Activated CD8-positive, alpha-beta T cell treated with anti-CD3 and anti-CD28 coated beads, Interleukin-2, amount 10 ng/mL, durations not matched to agents 7 days and 5 days (primary cell): ENCODE measurements at regions of chr12 and their contacts with region 1.

Region 1: GRCh38 chr12:104108755-104109445 is 29.1 kb downstream of the NFYB start:
- DNase-seq: peak; percentile 93
- ATAC-seq: peak; percentile 99
- H3K4me3 Mint-ChIP-seq: no peak overlapping the region
- H3K27ac Mint-ChIP-seq: peak overlapping the region; percentile 22
- H3K4me1 Mint-ChIP-seq: peaks cover 12% of the 10 kb centered on the region
- H3K27me3 Mint-ChIP-seq: no peaks in the 10 kb centered on the region

Region 2: DNA sequence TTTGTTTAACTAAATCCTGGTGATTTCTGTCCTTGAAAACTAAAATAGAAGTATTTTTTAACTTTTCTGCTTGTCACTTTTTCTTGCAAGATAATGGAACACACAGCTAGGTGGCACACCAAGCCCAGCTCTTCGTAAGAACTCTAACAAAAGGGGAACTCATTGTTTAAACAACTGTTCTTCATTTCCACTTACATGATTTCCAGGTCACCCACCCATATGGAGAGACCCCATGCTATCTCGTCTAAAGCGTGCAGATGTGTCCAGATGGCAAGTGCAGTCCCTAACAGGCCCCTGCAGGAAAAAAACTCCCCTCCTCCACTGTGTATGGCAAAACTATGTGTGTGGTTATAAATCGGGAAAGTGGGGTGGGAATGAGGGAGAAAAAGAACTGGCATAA is 224.6 kb before region 1 on chr12:
- CTCF ChIA-PET with region 1: interaction called, 63 read pairs
- POLR2A ChIA-PET with region 1: interaction called, 3 read pairs
- DNase-seq: peak; percentile 50
- ATAC-seq: no peak
- H3K4me3 Mint-ChIP-seq: no peak overlapping the region
- H3K27ac Mint-ChIP-seq: no peak overlapping the region
- H3K4me1 Mint-ChIP-seq: peaks cover 30% of the 10 kb centered on the region
- H3K27me3 Mint-ChIP-seq: no peaks in the 10 kb centered on the region

Region 3: DNA sequence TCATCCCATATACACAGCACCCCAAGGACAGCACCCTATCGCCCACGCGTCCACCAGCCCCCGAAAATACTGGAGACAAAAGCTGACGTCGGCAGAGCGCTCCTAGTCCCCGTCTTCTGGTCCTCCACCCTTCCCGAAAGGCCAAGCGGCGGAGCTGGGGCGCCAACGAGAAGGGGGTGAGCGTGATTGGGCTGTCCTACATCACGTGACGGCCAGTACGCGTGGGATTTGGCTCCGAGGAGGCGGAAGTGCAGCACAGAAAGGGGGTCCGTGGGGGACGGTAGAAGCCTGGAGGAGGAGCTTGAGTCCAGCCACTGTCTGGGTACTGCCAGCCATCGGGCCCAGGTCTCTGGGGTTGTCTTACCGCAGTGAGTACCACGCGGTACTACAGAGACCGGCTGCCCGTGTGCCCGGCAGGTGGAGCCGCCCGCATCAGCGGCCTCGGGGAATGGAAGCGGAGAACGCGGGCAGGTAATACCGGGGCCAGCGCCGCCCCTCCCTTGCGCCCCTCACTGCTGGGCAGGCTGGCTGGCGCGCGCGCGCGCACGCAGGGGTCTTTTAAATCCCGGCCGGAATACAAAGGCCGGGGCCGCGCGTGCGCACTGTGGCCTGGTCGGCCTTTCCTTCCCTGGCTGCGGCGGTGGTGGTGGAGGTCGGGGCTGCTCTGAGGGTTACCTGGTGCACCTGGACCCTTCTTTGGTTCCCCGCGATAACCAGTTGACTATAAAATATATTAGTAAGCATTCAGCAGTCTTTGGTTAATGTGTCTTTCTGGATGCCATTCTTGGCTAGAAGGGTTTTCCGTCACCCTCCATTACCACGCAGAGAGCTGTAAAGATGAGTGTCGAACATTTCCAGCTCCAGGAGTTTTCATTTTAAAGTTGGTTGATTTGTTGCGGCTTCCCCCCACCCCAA is 143.1 kb before region 1 on chr12 and contains the start of gene TDG:
- CTCF ChIA-PET with region 1: interaction called, 22 read pairs
- POLR2A ChIA-PET with region 1: no interaction called
- DNase-seq: peak; percentile 98
- ATAC-seq: peak; percentile 96
- H3K4me3 Mint-ChIP-seq: peak within 1 kb of the TSS; percentile 95
- H3K27ac Mint-ChIP-seq: peak within 1 kb of the TSS; percentile 96
- H3K4me1 Mint-ChIP-seq: peaks cover 49% of the 10 kb centered on the region
- H3K27me3 Mint-ChIP-seq: no peaks in the 10 kb centered on the region
- total RNA-seq, gene TDG: 33.5 to 37.7 TPM

Region 4: DNA sequence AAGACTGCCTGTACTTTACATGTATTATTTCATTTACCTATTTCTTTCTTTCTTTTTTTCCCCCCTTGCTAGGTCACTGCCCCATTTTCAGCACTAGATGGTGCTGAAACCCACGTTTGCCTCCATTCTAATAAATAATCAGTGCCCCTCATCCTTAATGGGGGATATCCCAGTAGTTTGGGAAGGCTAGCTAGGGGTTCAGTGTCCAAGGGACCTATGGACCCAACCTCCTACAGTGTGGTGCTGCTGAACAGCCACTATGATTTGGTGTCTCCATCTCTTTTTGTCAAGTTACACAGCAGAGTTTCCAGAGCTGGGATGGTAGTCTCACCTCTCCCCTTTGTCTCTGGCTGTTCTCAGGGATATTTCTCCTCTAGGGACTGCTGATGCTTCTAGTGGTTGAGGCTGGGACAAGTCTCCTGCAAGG is 51.1 kb before region 1 on chr12:
- CTCF ChIA-PET with region 1: interaction called, 80 read pairs
- POLR2A ChIA-PET with region 1: no interaction called
- DNase-seq: no peak
- ATAC-seq: no peak
- H3K4me3 Mint-ChIP-seq: no peak overlapping the region
- H3K27ac Mint-ChIP-seq: no peak overlapping the region
- H3K4me1 Mint-ChIP-seq: peaks cover 6% of the 10 kb centered on the region
- H3K27me3 Mint-ChIP-seq: peaks cover 50% of the 10 kb centered on the region

Region 5: DNA sequence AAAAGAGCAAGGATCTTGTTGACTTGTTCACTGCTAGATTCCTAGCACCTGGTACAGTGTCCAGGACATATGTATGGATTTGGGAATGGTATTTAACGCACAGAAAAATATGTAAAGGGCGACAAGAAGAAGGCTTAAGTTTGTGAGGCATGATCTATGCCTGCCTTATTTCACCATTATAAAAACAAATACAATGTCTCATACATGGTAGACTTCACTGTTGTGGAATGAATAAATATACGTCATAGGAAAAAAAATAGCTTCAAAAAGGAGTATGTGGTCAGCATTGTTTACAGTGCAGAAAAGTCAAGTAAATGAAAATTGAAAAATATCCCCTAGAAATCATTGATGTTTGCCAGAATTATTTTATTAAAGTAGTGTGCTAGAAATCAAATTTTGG is 14.6 kb before region 1 on chr12:
- CTCF ChIA-PET with region 1: interaction called, 44 read pairs
- POLR2A ChIA-PET with region 1: no interaction called
- DNase-seq: no peak
- ATAC-seq: no peak
- H3K4me3 Mint-ChIP-seq: no peak overlapping the region
- H3K27ac Mint-ChIP-seq: no peak overlapping the region
- H3K4me1 Mint-ChIP-seq: no peaks in the 10 kb centered on the region
- H3K27me3 Mint-ChIP-seq: no peaks in the 10 kb centered on the region